ENCODE measurements at regions of chr2 and their contacts with region 1.

Region 1: GRCh38 chr2:101151141-101151858 is at the start of gene TBC1D8:
- DNase-seq: peak; percentile 88
- H3K27ac ChIP-seq: peak within 1 kb of the TSS; percentile 88
- CTCF ChIP-seq: no peak

Region 2: GRCh38 chr2:101012706-101013181 is 138.6 kb before region 1 on chr2:
- CTCF ChIA-PET with region 1: interaction called, 12 read pairs
- POLR2A ChIA-PET with region 1: interaction called, 5 read pairs
- DNase-seq: no peak
- H3K27ac ChIP-seq: no peak overlapping the region
- CTCF ChIP-seq: peak; percentile 83

Region 3: DNA sequence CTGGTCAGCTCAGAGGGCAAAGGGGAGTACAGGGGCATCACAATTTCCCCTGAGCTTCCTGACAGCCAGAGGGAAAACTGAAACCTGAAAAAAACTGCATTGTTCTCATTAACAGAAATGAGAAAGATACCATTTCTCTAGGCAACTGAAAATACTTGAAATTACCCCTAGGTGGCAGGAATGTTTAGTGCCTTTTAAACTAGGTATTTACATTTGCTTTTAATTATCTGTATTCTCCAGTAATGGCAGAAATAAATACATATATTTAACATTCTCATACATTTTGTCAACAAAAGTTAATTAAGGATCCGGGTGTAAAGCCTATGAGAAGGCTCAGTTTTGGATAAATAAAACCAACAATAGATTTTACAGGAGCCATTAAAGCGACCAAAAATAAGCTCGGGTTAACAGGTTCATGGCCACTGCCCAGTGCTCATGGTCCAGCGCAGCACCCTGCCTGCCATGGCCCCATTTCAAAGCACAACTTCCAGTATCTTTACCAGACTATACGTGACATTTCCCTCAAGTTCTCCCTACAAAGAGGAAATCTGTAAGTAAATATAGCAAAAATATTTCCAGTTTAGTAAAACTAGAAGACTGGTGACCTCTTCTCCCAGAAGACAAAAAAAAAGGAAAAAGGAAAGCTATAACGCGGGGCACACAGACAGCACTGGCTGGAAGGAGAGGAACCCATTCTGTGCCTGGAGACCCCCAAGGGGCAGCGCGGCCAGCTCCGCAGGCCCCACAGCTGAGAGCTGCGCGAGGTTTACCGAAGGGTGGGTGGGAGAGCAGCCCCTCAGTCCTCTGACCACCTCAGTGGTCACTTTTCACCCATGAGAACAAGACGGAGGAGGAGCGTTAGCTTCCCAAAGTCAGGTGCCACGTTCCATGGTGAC is 114.5 kb before region 1 on chr2:
- CTCF ChIA-PET with region 1: interaction called, 30 read pairs
- POLR2A ChIA-PET with region 1: interaction called, 3 read pairs
- DNase-seq: peak; percentile 30
- H3K27ac ChIP-seq: peak overlapping the region; percentile 46
- CTCF ChIP-seq: peak; percentile 54

Measured in RWPE1 (cell line).